RWPE1 (cell line): ENCODE measurements at regions of chr1 and their contacts with region 1.

Region 1: GRCh38 chr1:175154629-175155472 is 37.7 kb downstream of the KIAA0040 start:
- DNase-seq: peak; percentile 58
- H3K27ac ChIP-seq: no peak overlapping the region
- CTCF ChIP-seq: peak; percentile 84

Region 2: DNA sequence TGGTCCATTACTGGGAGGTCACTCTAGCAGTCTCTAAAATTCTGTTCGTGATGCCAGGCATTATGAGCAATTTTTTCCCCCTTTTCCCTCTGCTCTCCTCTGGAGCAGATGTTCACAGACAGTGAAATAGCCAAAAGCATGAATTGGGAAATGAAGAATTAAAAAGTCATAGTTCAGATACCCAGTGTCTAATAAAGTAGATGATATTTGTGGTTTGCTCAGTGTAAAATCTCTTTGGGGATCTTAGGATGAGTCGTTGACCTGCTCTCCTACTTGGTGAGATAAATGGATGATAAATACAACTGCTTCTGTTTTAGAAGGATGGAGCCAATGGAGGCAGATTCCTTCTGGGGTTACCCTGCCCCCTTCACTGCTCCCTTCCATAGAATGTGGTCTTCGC is 18.6 kb before region 1 on chr1:
- CTCF ChIA-PET with region 1: no interaction called
- POLR2A ChIA-PET with region 1: no interaction called
- DNase-seq: no peak
- H3K27ac ChIP-seq: no peak overlapping the region
- CTCF ChIP-seq: no peak

Region 3: DNA sequence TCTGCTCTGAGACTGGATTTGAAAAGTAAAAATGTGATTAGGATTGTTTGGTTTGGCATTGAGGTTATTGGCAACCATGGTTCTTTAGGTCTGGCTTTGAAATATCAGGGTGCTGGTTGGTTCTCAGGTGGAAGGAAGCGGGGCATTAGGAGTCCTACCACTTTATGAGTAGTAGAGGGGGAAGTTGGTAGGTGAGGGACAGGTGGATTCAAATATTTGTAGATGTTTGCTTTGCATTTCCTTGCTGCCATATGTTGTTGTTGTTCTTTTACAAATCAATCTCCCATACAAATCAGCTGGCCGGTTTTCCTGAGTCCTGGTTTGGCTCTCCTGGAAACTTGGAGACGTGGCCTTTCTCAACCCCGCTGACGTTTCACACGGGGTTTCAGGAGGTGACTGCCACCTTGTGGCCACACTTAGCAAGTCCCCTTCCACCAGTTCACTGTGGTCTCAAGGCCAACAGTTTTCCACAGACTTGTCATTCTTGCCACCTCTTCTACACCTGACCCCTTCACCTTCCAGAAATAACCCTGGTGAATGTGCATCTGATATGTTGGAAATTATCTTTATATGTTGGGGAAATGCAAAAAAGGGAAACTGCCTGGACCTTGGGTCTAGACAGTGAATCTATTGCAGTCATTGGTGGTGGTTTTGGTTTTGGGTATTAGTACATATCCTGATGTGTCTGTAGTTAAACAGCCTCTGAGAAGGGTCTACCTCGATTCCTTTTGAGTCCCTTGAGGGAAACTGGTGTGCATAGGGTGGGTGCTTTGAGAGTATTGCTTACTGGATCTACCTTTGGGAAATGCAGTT is 164.8 kb after region 1 on chr1:
- CTCF ChIA-PET with region 1: interaction called, 39 read pairs
- POLR2A ChIA-PET with region 1: no interaction called
- DNase-seq: peak; percentile 81
- H3K27ac ChIP-seq: no peak overlapping the region
- CTCF ChIP-seq: peak; percentile 79